Mammary epithelial cell (primary cell): ENCODE measurements at regions of chr4 and their contacts with region 1.

Region 1: DNA sequence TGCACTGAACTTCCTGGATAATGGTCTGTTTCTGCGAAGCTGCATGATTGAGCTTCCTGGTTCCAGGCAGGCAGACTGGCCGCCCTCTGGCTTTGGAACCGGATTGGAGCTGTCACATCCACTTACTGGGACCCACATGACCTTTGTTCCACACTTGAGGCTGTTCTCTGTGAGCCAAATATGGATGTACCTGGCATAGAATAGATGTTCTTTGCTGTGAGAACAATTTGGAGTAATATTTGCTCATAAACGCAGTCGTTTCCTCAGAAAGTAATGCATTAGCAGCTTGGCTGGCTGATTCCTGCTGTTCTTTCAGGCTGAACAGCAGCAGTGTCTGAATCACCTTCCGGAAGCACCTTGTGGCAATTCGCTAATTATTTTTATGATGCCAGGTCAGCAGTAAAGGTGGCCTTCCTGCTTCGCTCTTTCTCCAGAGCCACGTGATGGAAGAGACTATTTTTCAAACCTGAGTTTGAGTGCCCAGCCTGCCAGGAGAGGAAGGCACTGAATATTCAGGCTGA is 78.1 kb upstream of the BOD1L1 start:
- DNase-seq: peak; percentile 81
- H3K4me3 ChIP-seq: peak overlapping the region in 1 of 3 experiments; percentile 28
- H3K27ac ChIP-seq: peak overlapping the region; percentile 91
- H3K4me1 ChIP-seq: peaks cover 51% of the 10 kb centered on the region
- H3K27me3 ChIP-seq: no peaks in the 10 kb centered on the region
- CTCF ChIP-seq: no peak

Region 2: DNA sequence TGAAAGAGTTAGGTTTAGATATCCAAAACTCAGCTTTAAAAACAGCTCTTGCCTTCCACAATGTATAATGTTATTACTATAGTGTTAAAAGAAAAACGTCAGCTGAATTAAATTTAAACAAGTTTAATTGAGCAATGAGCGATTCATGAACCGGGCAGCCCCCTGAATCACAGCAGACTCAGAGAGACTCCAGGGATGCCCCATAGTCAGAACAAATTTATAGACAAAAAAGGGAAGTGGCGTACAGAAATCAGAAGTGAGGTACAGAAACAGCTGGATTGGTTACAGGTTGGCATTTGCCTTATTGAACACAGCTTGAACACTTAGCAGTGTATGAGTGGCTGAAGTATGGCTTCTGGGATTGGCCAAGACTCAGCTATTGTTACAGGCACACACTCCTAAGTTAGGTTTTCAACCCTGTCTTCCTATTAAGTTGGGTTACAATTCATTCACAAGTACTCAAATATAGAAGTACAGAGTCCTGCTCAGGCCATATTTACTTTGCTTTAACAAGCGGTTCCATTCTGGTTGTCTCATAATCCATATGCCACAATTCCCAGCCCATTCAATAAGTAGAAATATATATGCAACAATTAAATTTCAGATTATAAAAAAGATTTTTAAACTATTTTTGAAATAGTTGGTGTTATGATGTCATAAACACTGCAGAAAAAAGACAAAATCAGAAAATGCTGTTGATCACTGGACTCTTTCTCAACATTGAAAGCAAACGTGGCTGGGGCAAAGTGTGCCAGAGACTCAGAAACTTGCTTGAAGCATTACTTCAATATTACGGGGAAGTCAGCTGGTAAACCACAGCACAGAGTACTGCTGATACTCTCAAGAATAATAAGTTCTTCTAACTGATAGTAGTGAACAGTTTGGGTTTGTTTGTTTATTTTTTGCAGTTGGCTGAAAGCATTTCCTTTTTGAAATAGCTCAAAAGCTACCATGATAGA is 681.2 kb before region 1 on chr4:
- CTCF ChIA-PET with region 1: no interaction called
- dilution Hi-C with region 1: no loop called
- in situ Hi-C with region 1: no loop called
- intact Hi-C with region 1: no loop called
- DNase-seq: no peak
- H3K4me3 ChIP-seq: no peak overlapping the region
- H3K27ac ChIP-seq: no peak overlapping the region
- H3K4me1 ChIP-seq: no peaks in the 10 kb centered on the region
- H3K27me3 ChIP-seq: no peaks in the 10 kb centered on the region
- CTCF ChIP-seq: no peak

Region 3: DNA sequence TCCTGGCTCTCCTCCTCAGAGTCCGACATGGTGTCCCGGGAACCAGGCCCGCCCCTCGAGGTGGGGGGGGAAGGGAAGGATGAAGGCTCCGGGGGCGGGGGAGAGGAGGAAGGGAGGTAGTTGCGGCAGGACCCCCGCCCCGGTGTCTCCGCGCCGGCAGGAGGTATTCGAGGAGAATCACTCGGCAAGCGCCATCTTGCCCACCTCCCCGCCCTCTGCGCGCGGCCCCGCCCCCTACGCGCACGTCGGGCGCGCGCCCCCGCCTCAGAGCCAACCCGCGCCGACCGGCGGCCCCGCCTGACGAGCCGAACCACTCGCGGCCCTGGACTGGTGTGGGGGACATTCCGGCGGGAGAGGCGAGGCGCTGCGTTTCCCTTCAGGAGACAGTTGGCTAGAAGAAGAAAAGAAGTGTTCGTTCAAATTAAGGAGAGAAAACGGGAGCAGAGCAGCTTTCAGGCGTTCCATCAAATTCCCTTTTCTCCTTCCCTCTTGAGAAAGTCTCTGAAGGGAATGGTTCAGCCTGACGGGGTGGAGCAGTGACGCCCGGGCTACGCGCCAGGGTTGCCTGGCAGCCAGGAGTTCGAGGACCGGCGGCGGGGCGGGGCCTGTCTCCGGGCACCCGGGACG is 221.3 kb before region 1 on chr4 and contains the start of gene RAB28:
- CTCF ChIA-PET with region 1: no interaction called
- dilution Hi-C with region 1: no loop called
- in situ Hi-C with region 1: no loop called
- intact Hi-C with region 1: loop called (anchors 10 kb)
- DNase-seq: peak; percentile 91
- H3K4me3 ChIP-seq: peak within 1 kb of the TSS; percentile 87 to 93 (median 91)
- H3K27ac ChIP-seq: peak within 1 kb of the TSS; percentile 100
- H3K4me1 ChIP-seq: peaks cover 19% of the 10 kb centered on the region
- H3K27me3 ChIP-seq: no peaks in the 10 kb centered on the region
- CTCF ChIP-seq: no peak
- total RNA-seq, gene RAB28: 13.0 to 20.0 TPM

Region 4: GRCh38 chr4:13783800-13784411 is 78.3 kb after region 1 on chr4:
- CTCF ChIA-PET with region 1: interaction called, 3 read pairs
- dilution Hi-C with region 1: no loop called
- in situ Hi-C with region 1: no loop called
- intact Hi-C with region 1: loop called (anchors 5 kb)
- DNase-seq: peak; percentile 64
- H3K4me3 ChIP-seq: no peak overlapping the region
- H3K27ac ChIP-seq: no peak overlapping the region
- H3K4me1 ChIP-seq: peaks cover 12% of the 10 kb centered on the region
- H3K27me3 ChIP-seq: no peaks in the 10 kb centered on the region
- CTCF ChIP-seq: no peak

Region 5: GRCh38 chr4:13907255-13907751 is 201.7 kb after region 1 on chr4:
- CTCF ChIA-PET with region 1: no interaction called
- dilution Hi-C with region 1: no loop called
- in situ Hi-C with region 1: no loop called
- intact Hi-C with region 1: loop called (anchors 5 kb)
- DNase-seq: peak; percentile 97
- H3K4me3 ChIP-seq: no peak overlapping the region
- H3K27ac ChIP-seq: peak overlapping the region; percentile 86
- H3K4me1 ChIP-seq: peaks cover 30% of the 10 kb centered on the region
- H3K27me3 ChIP-seq: no peaks in the 10 kb centered on the region
- CTCF ChIP-seq: peak; percentile 18 to 38

Region 6: DNA sequence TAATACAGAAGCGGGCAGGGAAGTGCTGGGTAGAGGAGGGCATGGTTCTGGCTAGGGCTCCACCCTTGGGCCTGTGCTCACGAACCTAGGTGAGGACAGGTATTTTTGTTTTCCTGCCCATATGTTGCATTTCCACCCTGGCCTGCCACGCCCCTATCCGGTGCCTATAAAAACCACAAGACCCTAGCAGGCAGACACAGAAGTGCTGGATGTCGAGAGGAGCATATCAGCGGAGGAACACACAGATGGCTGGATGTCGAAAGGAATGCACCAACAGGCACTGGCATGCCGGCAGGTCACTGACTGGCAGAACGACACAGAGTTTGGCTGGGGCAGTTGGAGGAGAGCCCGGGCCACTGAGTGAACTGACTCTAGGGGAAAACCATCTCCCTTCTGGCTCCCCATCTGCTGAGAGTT is 238.5 kb after region 1 on chr4:
- CTCF ChIA-PET with region 1: no interaction called
- dilution Hi-C with region 1: no loop called
- in situ Hi-C with region 1: no loop called
- intact Hi-C with region 1: loop called (anchors 1 kb)
- DNase-seq: peak; percentile 96
- H3K4me3 ChIP-seq: no peak overlapping the region
- H3K27ac ChIP-seq: no peak overlapping the region
- H3K4me1 ChIP-seq: peaks cover 15% of the 10 kb centered on the region
- H3K27me3 ChIP-seq: no peaks in the 10 kb centered on the region
- CTCF ChIP-seq: no peak

Region 7: DNA sequence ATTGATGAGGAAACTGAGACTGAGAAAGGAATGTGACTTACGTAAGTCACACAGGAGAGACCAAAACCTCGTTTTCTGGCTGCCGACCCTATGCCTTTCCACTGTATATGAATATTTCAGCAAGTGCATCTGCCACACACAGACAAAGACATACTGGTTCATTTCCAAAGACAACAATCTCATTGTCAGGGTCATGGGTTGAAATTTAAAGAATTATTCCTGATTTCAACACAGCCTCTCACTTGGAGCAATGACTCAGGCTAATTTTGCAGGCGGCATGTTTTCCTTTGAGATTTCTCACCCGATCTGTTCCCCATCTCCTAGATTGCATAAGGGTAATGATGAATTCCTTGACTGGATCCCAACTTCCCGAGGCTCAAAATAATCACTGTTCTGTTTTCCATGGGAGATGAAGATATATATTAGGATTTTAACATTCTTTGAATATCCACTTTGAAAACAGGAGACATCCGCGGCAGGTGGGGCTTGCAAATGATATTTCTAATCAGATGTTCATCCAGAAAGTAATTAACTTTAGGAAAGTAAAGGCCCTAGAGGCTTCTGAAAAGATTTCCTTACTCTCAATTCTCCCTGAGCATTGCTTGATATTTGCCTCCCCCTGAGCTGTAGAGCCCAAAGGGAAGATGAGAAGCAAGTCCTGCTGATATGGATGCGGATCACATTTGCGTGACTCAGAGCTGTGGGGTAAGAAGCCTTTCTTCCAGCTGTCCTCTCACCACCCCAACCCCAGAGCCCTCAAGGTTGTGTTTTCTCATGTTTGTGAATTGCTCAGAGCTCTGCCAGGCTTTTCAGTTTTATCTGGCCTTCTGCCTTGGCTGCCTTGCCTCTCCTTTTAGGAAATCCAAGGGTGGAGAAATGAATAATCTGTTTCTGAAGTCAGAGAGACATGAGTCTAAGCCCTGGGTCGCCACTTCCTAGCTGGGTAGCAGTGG is 283.0 kb after region 1 on chr4:
- CTCF ChIA-PET with region 1: no interaction called
- dilution Hi-C with region 1: no loop called
- in situ Hi-C with region 1: no loop called
- intact Hi-C with region 1: loop called (anchors 5 kb)
- DNase-seq: peak; percentile 94
- H3K4me3 ChIP-seq: no peak overlapping the region
- H3K27ac ChIP-seq: peak overlapping the region; percentile 79
- H3K4me1 ChIP-seq: peaks cover 36% of the 10 kb centered on the region
- H3K27me3 ChIP-seq: peaks cover 3% of the 10 kb centered on the region
- CTCF ChIP-seq: no peak

Region 8: GRCh38 chr4:14552119-14552518 is 846.5 kb after region 1 on chr4:
- CTCF ChIA-PET with region 1: no interaction called
- dilution Hi-C with region 1: no loop called
- in situ Hi-C with region 1: no loop called
- intact Hi-C with region 1: no loop called
- DNase-seq: no peak
- H3K4me3 ChIP-seq: no peak overlapping the region
- H3K27ac ChIP-seq: no peak overlapping the region
- H3K4me1 ChIP-seq: no peaks in the 10 kb centered on the region
- H3K27me3 ChIP-seq: peaks cover 3% of the 10 kb centered on the region
- CTCF ChIP-seq: no peak